ENCODE measurements at regions of chr3 and their contacts with region 1.

Region 1: GRCh38 chr3:137121704-137122314 is 164.0 kb downstream of the IL20RB start:
- DNase-seq: peak; percentile 23
- H3K4me3 Mint-ChIP-seq: no peak overlapping the region
- H3K27ac Mint-ChIP-seq: no peak overlapping the region
- H3K4me1 Mint-ChIP-seq: no peaks in the 10 kb centered on the region
- H3K27me3 Mint-ChIP-seq: peaks cover 16% of the 10 kb centered on the region

Region 2: GRCh38 chr3:137110484-137110883 is 11.3 kb before region 1 on chr3:
- CTCF ChIA-PET with region 1: interaction called, 15 read pairs
- POLR2A ChIA-PET with region 1: no interaction called
- DNase-seq: no peak
- H3K4me3 Mint-ChIP-seq: no peak overlapping the region
- H3K27ac Mint-ChIP-seq: no peak overlapping the region
- H3K4me1 Mint-ChIP-seq: no peaks in the 10 kb centered on the region
- H3K27me3 Mint-ChIP-seq: peaks cover 16% of the 10 kb centered on the region

Measured in activated CD4-positive, alpha-beta memory T cell treated with anti-CD3 and anti-CD28 coated beads, Interleukin-2, amount 10 ng/mL, durations not matched to agents 7 days and 5 days (primary cell).